ENCODE measurements at regions of chr1 and their contacts with region 1.

Region 1: GRCh38 chr1:165795894-165796293 is 27.2 kb upstream of the TMCO1 start:
- DNase-seq: no peak
- H3K4me3 ChIP-seq: no peak overlapping the region
- H3K27ac ChIP-seq: no peak overlapping the region
- H3K4me1 ChIP-seq: no peaks in the 10 kb centered on the region
- H3K27me3 ChIP-seq: no peaks in the 10 kb centered on the region
- CTCF ChIP-seq: no peak
- POLR2A ChIP-seq: no peak

Region 2: DNA sequence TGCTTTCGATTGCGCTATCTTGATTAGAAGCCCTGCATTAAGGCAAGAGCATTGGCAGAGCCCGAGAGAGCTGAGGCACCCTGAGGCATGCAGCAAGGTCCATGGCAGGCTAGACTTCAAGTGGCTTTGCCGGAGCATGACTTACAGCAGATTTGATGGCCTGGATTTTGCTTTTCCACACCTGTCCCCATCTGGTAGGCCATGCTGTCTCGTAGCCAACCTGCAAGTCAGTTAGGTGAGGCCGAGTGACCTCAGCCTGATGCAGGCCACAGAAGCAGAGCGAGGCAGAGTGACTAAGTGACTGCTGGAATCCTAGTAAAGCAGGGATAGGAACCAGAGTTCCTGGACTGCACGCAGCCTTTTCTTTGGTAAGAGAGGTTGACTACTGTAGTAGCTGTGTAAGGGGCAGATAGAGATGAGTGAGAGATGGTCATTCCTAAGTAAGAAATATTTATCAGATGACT is 1088.0 kb before region 1 on chr1:
- intact Hi-C with region 1: loop called (anchors 5 kb)
- DNase-seq: no peak
- H3K4me3 ChIP-seq: no peak overlapping the region
- H3K27ac ChIP-seq: peak overlapping the region; percentile 45 to 70
- H3K4me1 ChIP-seq: peaks cover 0 to 10% of the 10 kb centered on the region in 2 donors
- H3K27me3 ChIP-seq: no peaks in the 10 kb centered on the region
- CTCF ChIP-seq: no peak
- POLR2A ChIP-seq: no peak

Region 3: DNA sequence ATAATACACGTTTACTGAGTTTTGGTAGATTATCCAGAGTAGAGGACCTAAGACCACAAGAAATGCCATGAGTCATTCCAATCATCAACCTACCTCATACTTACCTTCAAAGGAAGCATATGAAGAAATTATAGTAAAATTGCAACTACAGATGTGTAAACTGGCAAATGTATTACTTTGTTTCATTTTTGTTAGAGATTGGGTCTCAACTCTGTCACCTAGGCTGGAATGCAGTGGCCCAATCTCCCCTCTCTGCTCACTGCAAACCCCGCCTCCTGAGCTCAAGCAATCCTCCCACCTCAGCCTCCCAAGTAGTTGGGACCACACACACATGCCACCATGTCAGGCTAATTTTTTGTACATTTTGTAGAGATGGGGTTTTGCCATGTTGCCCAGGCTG is 32.5 kb before region 1 on chr1:
- intact Hi-C with region 1: no loop called
- DNase-seq: no peak
- H3K4me3 ChIP-seq: no peak overlapping the region
- H3K27ac ChIP-seq: no peak overlapping the region
- H3K4me1 ChIP-seq: no peaks in the 10 kb centered on the region
- H3K27me3 ChIP-seq: no peaks in the 10 kb centered on the region
- CTCF ChIP-seq: no peak
- POLR2A ChIP-seq: no peak

Region 4: DNA sequence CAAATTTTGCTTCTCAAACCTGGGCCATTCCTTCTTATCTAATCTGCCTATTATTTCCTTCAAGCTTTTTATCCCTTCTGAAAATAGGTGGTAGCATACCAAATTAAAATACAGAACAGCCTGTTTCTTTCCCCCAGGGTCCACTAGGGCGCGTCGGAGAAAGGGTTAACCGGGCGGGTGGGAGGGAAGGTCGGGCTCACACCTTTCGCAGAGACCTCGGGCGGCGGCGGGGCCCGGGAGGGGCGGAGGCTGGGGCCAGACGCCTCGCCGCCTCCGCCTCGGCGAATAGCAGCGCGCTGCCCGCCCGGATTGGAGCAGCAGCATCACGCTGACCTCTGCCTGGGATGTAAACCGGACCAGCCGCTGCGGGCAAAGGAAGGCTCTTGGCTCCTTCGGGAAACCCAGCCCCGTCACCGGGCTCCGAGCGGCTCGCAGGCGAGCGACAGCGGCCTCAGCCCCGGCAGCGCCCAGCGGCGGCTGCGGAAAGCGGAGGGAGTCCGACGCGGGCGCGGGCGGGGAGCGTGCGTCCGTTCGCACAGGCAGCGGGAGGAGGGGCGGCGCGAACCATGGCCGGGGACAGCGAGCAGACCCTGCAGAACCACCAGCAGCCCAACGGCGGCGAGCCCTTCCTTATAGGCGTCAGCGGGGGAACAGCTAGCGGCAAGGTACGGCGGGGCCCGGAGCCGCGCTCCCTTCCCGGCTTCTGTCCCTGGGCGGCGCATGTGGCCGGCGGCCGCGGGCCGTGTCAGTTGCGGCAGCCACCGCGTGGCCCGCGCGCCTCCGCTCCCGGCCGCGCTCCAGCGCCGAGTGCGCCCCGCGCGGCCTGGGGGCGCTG is 31.6 kb after region 1 on chr1 and contains the start of gene UCK2:
- intact Hi-C with region 1: no loop called
- DNase-seq: peak; percentile 70 to 77
- H3K4me3 ChIP-seq: peak within 1 kb of the TSS; percentile 61 to 88 (median 88)
- H3K27ac ChIP-seq: peak within 1 kb of the TSS; percentile 88 to 92
- H3K4me1 ChIP-seq: no peaks in the 10 kb centered on the region
- H3K27me3 ChIP-seq: no peaks in the 10 kb centered on the region
- CTCF ChIP-seq: peak in 1 of 3 donors; percentile 24
- POLR2A ChIP-seq: no peak
- total RNA-seq, gene UCK2: 13.6 to 51.1 (median 45.9) TPM

Measured in breast epithelium (tissue), 4 donors.